ENCODE measurements at regions of chr4 and their contacts with region 1.

Region 1: DNA sequence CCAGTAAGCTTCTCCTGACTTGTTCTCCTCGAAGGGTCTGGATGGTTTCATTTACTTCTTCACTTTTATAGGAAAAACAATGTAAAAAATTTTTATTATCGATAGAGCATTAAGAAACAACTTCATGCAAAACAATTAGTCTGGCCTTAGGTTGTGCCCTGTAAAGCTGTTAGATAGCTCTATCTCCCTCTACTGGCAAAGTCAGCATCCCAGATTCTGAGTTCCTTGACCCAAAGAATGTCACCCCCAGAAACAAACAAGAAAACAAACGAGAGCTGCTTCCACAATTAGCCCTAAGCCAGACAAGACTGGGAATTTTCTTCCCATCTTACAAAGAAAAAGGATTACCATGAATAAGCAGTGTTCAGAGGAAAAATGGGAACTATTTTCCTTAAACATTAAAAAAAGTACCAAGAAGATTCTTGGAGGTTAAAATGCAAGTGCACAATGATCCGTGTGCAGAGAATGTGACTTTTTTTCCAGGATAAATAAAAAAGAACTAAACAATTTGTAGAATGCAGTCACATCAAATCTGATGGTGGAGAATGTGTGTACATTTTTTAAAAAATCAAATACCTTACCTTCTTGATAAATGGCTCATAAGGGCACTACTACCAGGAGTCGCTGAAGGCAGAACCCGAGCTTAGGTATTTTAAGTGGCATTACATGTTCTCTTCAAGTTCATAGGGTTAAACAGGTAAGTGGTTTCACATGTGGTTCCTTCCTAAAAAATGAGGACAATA is 293.2 kb downstream of the FBXO8 start:
- DNase-seq: no peak
- H3K4me3 ChIP-seq: 0 out of 4 replicates have a peak overlapping the region, but pooled peaks of 1 of the 2 experiments have one; percentile 2
- H3K27ac ChIP-seq: peak overlapping the region; percentile 15 to 100
- H3K4me1 ChIP-seq: peaks cover 18 to 34% of the 10 kb centered on the region in 2 experiments; a peak in 3 of 4 replicates
- H3K27me3 ChIP-seq: no peaks in the 10 kb centered on the region
- CTCF ChIP-seq: peak; percentile 85
- EP300 ChIP-seq: peak in 1 of 2 experiments; percentile 22; a peak in 1 of 4 replicates
- RAD21 ChIP-seq: peak; percentile 85

Region 2: DNA sequence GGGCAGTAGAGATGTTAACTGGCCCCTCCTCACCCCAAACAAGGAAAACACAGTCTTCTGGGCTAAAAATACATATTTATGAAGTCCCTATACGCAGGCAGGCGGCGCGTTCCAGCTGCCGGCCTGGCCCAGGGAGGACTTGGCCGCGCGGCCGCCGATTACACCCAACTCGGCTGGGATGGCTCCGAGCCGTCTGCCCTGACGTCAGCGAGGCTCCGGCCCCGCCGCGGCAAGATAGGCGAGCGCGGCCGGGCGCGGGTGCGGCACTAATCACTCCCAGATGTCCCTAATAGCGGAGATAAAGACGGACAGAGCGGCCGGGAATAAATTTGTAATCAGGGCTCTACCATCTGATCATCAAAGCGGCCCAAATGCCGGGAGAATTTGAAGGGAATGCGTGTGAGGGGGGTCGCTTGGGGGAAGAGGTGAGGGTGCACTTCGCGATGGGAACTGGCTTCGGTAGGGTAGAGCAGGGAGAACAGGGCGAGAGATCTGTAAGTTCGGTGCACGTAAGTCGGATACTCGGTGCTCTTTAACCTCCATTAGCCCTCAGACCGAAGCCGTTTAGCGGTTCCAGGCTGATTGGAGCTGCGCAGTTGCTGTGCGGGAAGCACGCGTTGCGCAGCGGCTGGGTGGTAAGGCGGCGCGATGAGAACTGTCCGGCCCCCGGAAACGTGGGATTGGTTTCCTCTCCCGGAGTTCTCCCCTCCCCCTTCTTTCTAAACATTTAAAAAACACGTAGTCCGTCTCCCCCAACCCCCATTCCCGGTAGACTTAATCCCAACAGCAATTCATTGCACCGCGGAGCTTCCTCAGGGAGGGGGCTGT is 468.0 kb before region 1 on chr4:
- CTCF ChIA-PET with region 1: interaction called, 20 read pairs
- POLR2A ChIA-PET with region 1: interaction called, 160 read pairs
- DNase-seq: peak; percentile 73
- H3K4me3 ChIP-seq: peak overlapping the region; percentile 61 to 92
- H3K27ac ChIP-seq: peak overlapping the region; percentile 99
- H3K4me1 ChIP-seq: peaks cover 23 to 30% of the 10 kb centered on the region in 2 experiments
- H3K27me3 ChIP-seq: no peaks in the 10 kb centered on the region
- CTCF ChIP-seq: peak; percentile 22
- EP300 ChIP-seq: peak in 1 of 2 experiments; percentile 82; a peak in 2 of 4 replicates
- RAD21 ChIP-seq: no peak

Region 3: DNA sequence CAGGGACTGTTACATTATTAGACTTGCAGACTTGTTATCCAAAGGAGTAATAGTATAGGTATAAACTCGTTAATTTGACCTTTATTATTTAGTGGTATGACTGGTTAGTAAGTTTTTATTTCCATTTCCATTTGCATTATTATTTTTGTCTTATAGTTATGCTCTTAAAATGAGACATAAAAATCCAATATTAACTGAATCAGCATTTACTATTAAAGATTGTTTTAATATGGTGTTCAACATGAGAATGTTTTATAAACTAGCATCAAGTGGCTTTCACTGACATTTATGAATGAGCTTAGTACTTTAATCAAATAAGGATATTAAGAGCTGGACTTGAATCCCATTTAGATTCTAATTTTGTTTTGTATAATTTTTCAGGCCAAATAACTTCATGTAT is 232.2 kb before region 1 on chr4:
- CTCF ChIA-PET with region 1: interaction called, 27 read pairs
- POLR2A ChIA-PET with region 1: interaction called, 4 read pairs
- DNase-seq: no peak
- H3K4me3 ChIP-seq: no peak overlapping the region
- H3K27ac ChIP-seq: peak overlapping the region in 1 of 2 experiments; percentile 68; a peak in 2 of 4 replicates
- H3K4me1 ChIP-seq: peaks cover 0 to 25% of the 10 kb centered on the region in 2 experiments; a peak in 2 of 4 replicates
- H3K27me3 ChIP-seq: no peaks in the 10 kb centered on the region
- CTCF ChIP-seq: no peak
- EP300 ChIP-seq: no peak
- RAD21 ChIP-seq: no peak

Region 4: GRCh38 chr4:173845580-173845979 is 144.7 kb before region 1 on chr4:
- CTCF ChIA-PET with region 1: no interaction called
- POLR2A ChIA-PET with region 1: no interaction called
- DNase-seq: no peak
- H3K4me3 ChIP-seq: no peak overlapping the region
- H3K27ac ChIP-seq: no peak overlapping the region
- H3K4me1 ChIP-seq: no peaks in the 10 kb centered on the region
- H3K27me3 ChIP-seq: no peaks in the 10 kb centered on the region
- CTCF ChIP-seq: no peak
- EP300 ChIP-seq: no peak
- RAD21 ChIP-seq: no peak

Region 5: DNA sequence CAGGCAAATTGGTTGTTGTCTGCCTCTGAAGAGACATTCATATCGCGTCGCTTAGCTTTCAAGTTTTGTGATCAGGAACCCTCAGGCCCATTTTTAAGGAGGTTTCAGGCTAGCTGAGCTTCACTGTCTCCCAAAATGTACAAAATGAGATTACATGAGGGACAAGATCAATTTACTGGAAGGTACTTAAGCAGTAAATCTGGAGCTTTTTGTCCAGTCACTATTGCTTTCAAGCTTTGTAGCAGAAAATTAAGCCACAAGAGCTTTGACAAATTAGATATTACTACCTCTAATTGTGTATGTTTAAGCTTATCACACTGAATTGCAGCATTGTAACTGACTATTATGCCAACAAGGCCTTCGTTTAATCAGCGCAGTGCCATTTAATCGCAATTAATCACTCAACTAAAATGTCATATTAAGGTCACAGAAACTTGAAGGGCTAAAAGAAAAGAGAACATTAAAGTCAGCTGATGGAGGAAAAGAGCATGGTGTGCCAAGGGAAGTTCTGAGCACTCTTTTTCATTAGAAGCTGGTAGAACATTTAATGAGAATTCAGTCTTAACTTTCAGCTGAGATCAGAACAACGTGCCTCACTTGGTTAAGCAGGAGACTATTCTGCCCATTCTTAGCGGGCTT is 59.8 kb before region 1 on chr4:
- CTCF ChIA-PET with region 1: interaction called, 66 read pairs
- POLR2A ChIA-PET with region 1: interaction called, 48 read pairs
- DNase-seq: peak; percentile 49
- H3K4me3 ChIP-seq: no peak overlapping the region
- H3K27ac ChIP-seq: peak overlapping the region; percentile 28 to 100; a peak in 3 of 4 replicates
- H3K4me1 ChIP-seq: peaks cover 22 to 62% of the 10 kb centered on the region in 2 experiments; a peak in 3 of 4 replicates
- H3K27me3 ChIP-seq: no peaks in the 10 kb centered on the region
- CTCF ChIP-seq: no peak
- EP300 ChIP-seq: peak; percentile 40 to 97
- RAD21 ChIP-seq: peak; percentile 12

Region 6: GRCh38 chr4:174012135-174012885 is 22.0 kb after region 1 on chr4:
- CTCF ChIA-PET with region 1: interaction called, 37 read pairs
- POLR2A ChIA-PET with region 1: interaction called, 52 read pairs
- DNase-seq: no peak
- H3K4me3 ChIP-seq: no peak overlapping the region
- H3K27ac ChIP-seq: peak overlapping the region; percentile 16 to 100; a peak in 3 of 4 replicates
- H3K4me1 ChIP-seq: peaks cover 7 to 42% of the 10 kb centered on the region in 2 experiments; a peak in 3 of 4 replicates
- H3K27me3 ChIP-seq: no peaks in the 10 kb centered on the region
- CTCF ChIP-seq: no peak
- EP300 ChIP-seq: no peak
- RAD21 ChIP-seq: no peak

Region 7: DNA sequence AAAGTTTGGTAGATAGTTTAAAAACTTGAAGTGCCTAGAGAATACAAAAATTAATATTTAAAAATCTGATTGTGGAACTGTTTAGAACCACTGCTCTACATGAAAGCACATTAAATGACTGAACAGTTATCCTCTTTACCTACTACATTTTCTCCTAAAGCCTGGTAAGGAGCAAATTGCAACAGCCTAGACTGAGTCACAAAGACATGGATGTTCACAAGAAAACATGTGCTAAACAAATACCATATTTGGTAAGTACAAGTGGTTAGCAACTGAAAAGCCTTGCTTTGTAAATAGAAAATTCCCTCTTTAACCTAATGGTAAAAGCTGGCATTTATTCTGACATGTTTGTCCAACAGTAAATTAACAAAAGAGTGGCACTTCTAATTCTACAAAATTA is 90.1 kb after region 1 on chr4:
- CTCF ChIA-PET with region 1: no interaction called
- POLR2A ChIA-PET with region 1: no interaction called
- DNase-seq: no peak
- H3K4me3 ChIP-seq: no peak overlapping the region
- H3K27ac ChIP-seq: no peak overlapping the region; a peak in 1 of 4 replicates
- H3K4me1 ChIP-seq: no peaks in the 10 kb centered on the region; a peak in 1 of 4 replicates
- H3K27me3 ChIP-seq: no peaks in the 10 kb centered on the region
- CTCF ChIP-seq: no peak
- EP300 ChIP-seq: no peak
- RAD21 ChIP-seq: no peak

Region 8: GRCh38 chr4:174648812-174649211 is 658.5 kb after region 1 on chr4:
- CTCF ChIA-PET with region 1: no interaction called
- POLR2A ChIA-PET with region 1: no interaction called
- DNase-seq: no peak
- H3K4me3 ChIP-seq: no peak overlapping the region
- H3K27ac ChIP-seq: no peak overlapping the region
- H3K4me1 ChIP-seq: no peaks in the 10 kb centered on the region
- H3K27me3 ChIP-seq: no peaks in the 10 kb centered on the region
- CTCF ChIP-seq: no peak
- EP300 ChIP-seq: no peak
- RAD21 ChIP-seq: no peak

Measured in SK-N-SH (cell line).